Caki2 (cell line): ENCODE measurements at regions of chr5 and their contacts with region 1.

Region 1: DNA sequence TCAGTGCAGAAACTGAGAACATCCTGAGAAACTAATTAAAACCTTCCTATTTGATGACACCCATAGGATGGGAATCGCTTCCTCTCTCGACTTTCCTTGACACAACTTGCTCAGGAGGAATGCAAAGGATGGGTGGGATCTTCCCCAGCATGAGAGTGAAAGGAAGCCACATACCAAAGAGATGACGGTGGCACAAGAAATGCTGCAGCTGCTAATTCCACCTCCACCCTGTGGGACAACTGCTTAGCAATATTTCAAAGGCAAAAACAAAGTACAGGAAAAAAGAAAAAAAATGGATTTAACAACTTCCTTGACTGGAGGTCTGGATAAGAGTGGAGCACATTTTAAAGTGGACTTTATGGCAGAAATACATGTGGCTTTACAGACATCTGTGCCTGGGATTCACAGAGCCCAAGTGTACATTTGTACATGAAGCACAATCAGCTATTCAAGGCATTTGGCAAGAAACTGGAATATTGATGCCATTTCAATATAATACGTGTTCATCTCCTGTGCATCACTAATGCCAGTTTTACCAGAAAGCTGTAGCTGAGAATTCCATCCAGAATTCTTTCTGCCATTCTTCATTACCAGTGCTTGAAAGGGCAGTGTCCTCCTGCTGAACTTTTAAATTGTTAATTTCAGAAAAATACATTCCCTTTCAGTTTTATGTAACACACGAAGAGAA is 359.2 kb upstream of the ACTBL2 start:
- DNase-seq: peak; percentile 94

Region 2: DNA sequence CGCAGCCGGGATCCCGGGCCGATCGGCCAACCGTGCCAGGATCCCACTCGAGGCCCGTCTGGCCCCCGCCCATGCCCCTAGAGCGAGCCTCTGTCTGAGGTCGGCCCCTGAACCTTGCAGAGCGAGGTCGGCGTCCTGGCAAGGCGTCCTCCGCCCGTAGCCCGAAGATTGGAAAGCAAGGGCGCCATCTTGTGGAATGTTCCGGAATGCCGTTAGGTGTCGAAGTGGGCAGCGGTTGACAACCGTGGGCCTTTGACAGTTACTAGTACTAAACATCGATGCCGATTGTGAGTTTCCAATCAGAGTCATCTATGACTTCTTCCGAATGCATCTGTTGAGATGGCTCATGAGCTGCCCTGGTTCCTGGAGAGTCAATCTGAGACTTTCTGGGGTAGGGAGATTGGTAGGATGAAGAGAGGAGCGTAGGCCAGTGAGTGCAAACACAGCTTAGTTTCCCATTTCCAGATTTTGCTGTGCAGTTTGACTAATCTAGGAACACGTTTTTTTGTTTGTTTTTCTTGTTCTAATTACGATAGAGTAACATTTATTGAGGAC is 619.0 kb after region 1 on chr5:
- in situ Hi-C with region 1: loop called (anchors 25 kb)
- DNase-seq: peak; percentile 93